Activated T-helper 1 cell treated with anti-CD3 and anti-CD28 coated beads, Interleukin-12 subunit alpha, Interleukin-12 subunit beta, Interleukin-2, Interleukin-4 antibody, amounts not matched to agents 30 ng/mL and 10 ng/mL and 1 ng/mL, durations not matched to agents 14 hours and 24 hours and 36 hours (primary cell): ENCODE measurements at regions of chr17 and their contacts with region 1.

Region 1: DNA sequence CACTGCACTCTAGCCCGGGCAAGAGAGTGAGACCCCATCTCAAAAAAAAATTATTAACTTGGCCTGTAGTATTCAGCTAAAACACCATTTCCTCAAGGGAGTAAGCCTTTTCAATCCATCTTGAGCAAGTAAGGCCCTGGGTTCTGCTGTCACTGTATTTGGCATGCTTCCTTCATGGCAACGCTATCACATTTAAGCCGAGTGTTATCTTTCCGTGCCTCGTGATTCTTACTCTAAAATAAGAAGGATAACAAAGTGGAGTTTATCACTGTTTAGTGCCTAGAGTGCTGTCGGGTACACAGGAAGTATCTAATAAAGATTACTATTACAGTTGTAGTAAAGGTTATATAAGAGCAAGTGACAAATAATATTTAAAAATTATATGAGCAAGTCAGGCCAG is 8.8 kb downstream of the VPS53 start:
- DNase-seq: no peak
- H3K4me3 Mint-ChIP-seq: no peak overlapping the region
- H3K27ac Mint-ChIP-seq: no peak overlapping the region
- H3K4me1 Mint-ChIP-seq: peaks cover 19% of the 10 kb centered on the region
- H3K27me3 Mint-ChIP-seq: no peaks in the 10 kb centered on the region

Region 2: GRCh38 chr17:143782-144281 is 562.0 kb before region 1 on chr17:
- intact Hi-C with region 1: loop called (anchors 5 kb)
- DNase-seq: peak; percentile 83
- H3K4me3 Mint-ChIP-seq: no peak overlapping the region
- H3K27ac Mint-ChIP-seq: no peak overlapping the region
- H3K4me1 Mint-ChIP-seq: no peaks in the 10 kb centered on the region
- H3K27me3 Mint-ChIP-seq: peaks cover 9% of the 10 kb centered on the region

Region 3: DNA sequence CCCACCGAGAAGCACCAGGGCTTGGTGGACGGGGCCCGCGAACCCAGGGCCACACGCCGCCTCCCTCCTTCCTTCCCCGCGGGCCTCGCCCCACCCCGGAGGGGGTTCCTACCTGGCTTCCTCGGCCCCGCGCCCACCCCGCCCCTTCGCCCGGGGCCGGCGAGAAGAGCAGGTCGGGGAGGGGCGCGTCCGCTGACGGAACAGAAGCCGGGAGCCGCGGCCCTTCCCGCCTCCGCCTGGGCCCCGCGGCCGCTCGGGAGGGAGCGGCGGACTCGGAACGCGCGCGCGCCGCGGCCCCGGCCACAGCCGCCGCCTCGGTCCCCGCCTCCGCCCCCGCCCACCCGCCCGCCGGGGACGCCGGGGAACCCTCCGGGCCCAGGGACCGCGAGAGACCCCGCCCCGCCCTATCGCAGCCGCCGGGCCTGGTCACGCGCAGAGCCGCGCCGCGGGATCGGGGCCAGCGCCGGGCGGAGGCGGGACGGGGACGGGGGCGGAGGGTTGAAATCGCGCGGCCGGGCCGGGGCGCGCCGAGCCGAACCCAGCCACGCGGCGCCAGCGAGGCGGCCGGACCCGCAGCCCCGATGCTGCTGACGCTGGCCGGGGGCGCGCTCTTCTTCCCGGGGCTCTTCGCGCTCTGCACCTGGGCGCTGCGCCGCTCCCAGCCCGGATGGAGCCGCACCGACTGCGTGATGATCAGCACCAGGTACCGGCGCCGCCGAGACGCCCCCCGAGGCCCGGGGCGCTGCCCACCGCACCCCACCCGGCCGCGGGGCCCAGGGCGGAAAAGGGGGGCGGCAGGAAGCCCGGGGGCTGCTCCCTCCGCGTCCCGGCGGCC is 26.4 kb after region 1 on chr17 and contains the start of gene TLCD3A:
- intact Hi-C with region 1: no loop called
- DNase-seq: peak; percentile 61
- H3K4me3 Mint-ChIP-seq: peak within 1 kb of the TSS; percentile 90
- H3K27ac Mint-ChIP-seq: peak within 1 kb of the TSS; percentile 95
- H3K4me1 Mint-ChIP-seq: peaks cover 28% of the 10 kb centered on the region
- H3K27me3 Mint-ChIP-seq: peaks cover 6% of the 10 kb centered on the region
- total RNA-seq, gene TLCD3A: 36.3 and 36.8 TPM in 2 replicates

Region 4: DNA sequence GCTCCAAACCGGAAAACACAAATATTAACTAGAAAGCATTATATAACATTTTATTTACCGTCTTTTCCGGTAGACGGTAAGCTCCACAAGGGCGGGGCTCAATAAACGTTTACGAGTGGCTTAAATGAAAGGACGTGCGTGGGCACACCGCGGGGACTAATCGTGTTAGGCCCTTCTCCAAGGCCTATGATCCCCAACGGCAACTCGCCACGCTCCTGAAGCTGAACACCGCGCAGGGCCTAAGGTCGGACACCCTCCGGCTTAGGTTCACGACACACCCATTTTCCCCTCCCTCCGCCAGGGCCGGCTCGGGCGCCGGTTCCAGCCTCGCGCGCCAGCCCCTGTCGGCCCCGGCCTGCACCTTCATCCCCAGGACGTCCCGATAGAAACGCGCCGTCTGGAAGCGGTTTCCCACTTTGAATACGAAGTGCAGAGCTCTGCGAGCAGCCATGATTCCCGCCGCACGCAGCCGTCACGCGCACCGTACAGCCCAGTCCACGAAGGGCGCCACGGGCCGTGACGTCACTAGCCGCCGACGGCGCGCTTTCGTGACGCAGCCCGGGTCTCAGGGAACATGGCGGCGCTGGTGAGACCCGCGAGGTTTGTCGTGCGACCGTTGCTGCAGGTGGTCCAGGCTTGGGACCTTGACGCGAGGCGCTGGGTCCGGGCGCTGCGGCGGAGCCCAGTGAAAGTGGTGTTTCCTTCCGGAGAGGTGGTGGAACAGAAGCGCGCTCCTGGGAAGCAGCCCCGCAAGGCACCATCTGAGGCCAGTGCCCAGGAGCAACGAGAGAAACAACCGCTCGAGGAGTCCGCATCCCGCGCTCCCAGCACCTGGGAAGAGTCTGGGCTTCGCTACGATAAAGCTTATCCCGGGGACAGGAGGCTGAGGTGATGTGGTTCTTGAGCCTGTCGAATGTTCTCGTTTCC is 76.2 kb after region 1 on chr17 and contains the starts of genes GLOD4 and MRM3:
- intact Hi-C with region 1: loop called (anchors 5 kb)
- DNase-seq: peak; percentile 94
- H3K4me3 Mint-ChIP-seq: peak within 1 kb of the TSS; percentile 97
- H3K27ac Mint-ChIP-seq: peak within 1 kb of the TSS; percentile 97
- H3K4me1 Mint-ChIP-seq: peaks cover 37% of the 10 kb centered on the region
- H3K27me3 Mint-ChIP-seq: no peaks in the 10 kb centered on the region
- total RNA-seq, gene GLOD4: 97.0 and 97.6 TPM in 2 replicates
- total RNA-seq, gene MRM3: 31.7 and 32.0 TPM in 2 replicates